ENCODE measurements at regions of chr9 and their contacts with region 1.

Region 1: GRCh38 chr9:101758304-101758930 is 20.0 kb upstream of the GRIN3A start:
- DNase-seq: no peak
- ATAC-seq: no peak
- H3K4me3 ChIP-seq: no peak overlapping the region
- H3K27ac ChIP-seq: no peak overlapping the region
- H3K4me1 ChIP-seq: no peaks in the 10 kb centered on the region
- H3K27me3 ChIP-seq: no peaks in the 10 kb centered on the region
- CTCF ChIP-seq: no peak
- POLR2A ChIP-seq: no peak
- RAD21 ChIP-seq: no peak

Region 2: GRCh38 chr9:101117161-101117560 is 641.3 kb before region 1 on chr9:
- CTCF ChIA-PET with region 1: no interaction called
- POLR2A ChIA-PET with region 1: no interaction called
- dilution Hi-C with region 1: no loop called
- in situ Hi-C with region 1: no loop called
- intact Hi-C with region 1: no loop called
- DNase-seq: no peak
- ATAC-seq: no peak
- H3K4me3 ChIP-seq: no peak overlapping the region
- H3K27ac ChIP-seq: no peak overlapping the region
- H3K4me1 ChIP-seq: no peaks in the 10 kb centered on the region
- H3K27me3 ChIP-seq: no peaks in the 10 kb centered on the region
- CTCF ChIP-seq: no peak
- POLR2A ChIP-seq: no peak
- RAD21 ChIP-seq: no peak

Region 3: GRCh38 chr9:101618698-101619097 is 139.7 kb before region 1 on chr9:
- CTCF ChIA-PET with region 1: no interaction called
- POLR2A ChIA-PET with region 1: no interaction called
- dilution Hi-C with region 1: no loop called
- in situ Hi-C with region 1: no loop called
- intact Hi-C with region 1: no loop called
- DNase-seq: no peak
- ATAC-seq: no peak
- H3K4me3 ChIP-seq: no peak overlapping the region
- H3K27ac ChIP-seq: no peak overlapping the region
- H3K4me1 ChIP-seq: no peaks in the 10 kb centered on the region
- H3K27me3 ChIP-seq: no peaks in the 10 kb centered on the region
- CTCF ChIP-seq: no peak
- POLR2A ChIP-seq: no peak
- RAD21 ChIP-seq: no peak

Region 4: GRCh38 chr9:101705135-101705661 is 53.2 kb before region 1 on chr9:
- CTCF ChIA-PET with region 1: no interaction called
- POLR2A ChIA-PET with region 1: no interaction called
- dilution Hi-C with region 1: no loop called
- in situ Hi-C with region 1: no loop called
- intact Hi-C with region 1: loop called (anchors 2 kb)
- DNase-seq: no peak
- ATAC-seq: peak; percentile 46; the same call in 1 of the 2 replicates
- H3K4me3 ChIP-seq: no peak overlapping the region
- H3K27ac ChIP-seq: no peak overlapping the region
- H3K4me1 ChIP-seq: no peaks in the 10 kb centered on the region
- H3K27me3 ChIP-seq: no peaks in the 10 kb centered on the region
- CTCF ChIP-seq: no peak
- POLR2A ChIP-seq: no peak
- RAD21 ChIP-seq: no peak

Region 5: GRCh38 chr9:101893661-101894646 is 135.5 kb after region 1 on chr9:
- CTCF ChIA-PET with region 1: no interaction called
- POLR2A ChIA-PET with region 1: no interaction called
- dilution Hi-C with region 1: no loop called
- in situ Hi-C with region 1: no loop called
- intact Hi-C with region 1: no loop called
- DNase-seq: no peak
- ATAC-seq: no peak
- H3K4me3 ChIP-seq: no peak overlapping the region
- H3K27ac ChIP-seq: no peak overlapping the region
- H3K4me1 ChIP-seq: no peaks in the 10 kb centered on the region
- H3K27me3 ChIP-seq: no peaks in the 10 kb centered on the region
- CTCF ChIP-seq: no peak
- POLR2A ChIP-seq: no peak
- RAD21 ChIP-seq: no peak

Region 6: DNA sequence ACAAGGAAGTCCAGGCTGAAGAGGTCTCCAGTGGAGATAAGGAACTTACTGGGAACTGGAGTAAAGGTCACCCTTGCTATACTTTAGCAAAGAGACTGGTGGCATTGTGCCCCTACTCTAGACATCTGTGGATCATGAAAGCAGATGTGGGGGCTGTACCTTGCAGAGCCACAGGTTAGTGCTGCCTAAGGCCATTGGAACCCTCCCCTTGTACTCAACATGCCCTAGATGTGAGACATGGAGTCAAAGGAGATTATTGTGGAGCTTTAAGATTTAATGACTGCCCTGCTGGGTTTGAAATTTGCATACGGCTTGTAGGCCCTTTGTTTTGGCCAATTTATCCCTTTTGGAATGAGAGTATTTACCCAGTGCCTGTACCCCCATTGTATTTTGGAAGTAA is 377.4 kb after region 1 on chr9:
- CTCF ChIA-PET with region 1: no interaction called
- POLR2A ChIA-PET with region 1: no interaction called
- dilution Hi-C with region 1: no loop called
- in situ Hi-C with region 1: no loop called
- intact Hi-C with region 1: no loop called
- DNase-seq: no peak
- ATAC-seq: no peak
- H3K4me3 ChIP-seq: no peak overlapping the region
- H3K27ac ChIP-seq: no peak overlapping the region
- H3K4me1 ChIP-seq: no peaks in the 10 kb centered on the region
- H3K27me3 ChIP-seq: no peaks in the 10 kb centered on the region
- CTCF ChIP-seq: no peak
- POLR2A ChIP-seq: no peak
- RAD21 ChIP-seq: no peak